ENCODE measurements at regions of chr11 and their contacts with region 1.

Region 1: GRCh38 chr11:67572747-67573419 is 10.7 kb upstream of the GSTP1 start:
- DNase-seq: peak; percentile 30 to 87 (median 48)
- ATAC-seq: peak; percentile 85
- H3K4me3 ChIP-seq: no peak overlapping the region
- H3K27ac ChIP-seq: peak overlapping the region; percentile 67; the same call in 2 of the 3 replicates
- H3K4me1 ChIP-seq: peaks cover 15 to 21% of the 10 kb centered on the region in 2 experiments; a peak in 4 of 5 replicates
- H3K27me3 ChIP-seq: no peaks in the 10 kb centered on the region
- CTCF ChIP-seq: peak; percentile 80 to 82 (median 81)
- EP300 ChIP-seq: no peak; the same call in 1 of the 2 replicates
- POLR2A ChIP-seq: no peak
- RAD21 ChIP-seq: peak; percentile 77 to 92

Region 2: GRCh38 chr11:67583247-67584204 is 10.6 kb after region 1 on chr11 and contains the start of gene GSTP1:
- CTCF ChIA-PET with region 1: interaction called, 3 read pairs
- POLR2A ChIA-PET with region 1: interaction called, 20 read pairs
- in situ Hi-C with region 1: no loop called
- intact Hi-C with region 1: no loop called
- DNase-seq: peak; percentile 94 to 96 (median 94)
- ATAC-seq: peak; percentile 95
- H3K4me3 ChIP-seq: peak within 1 kb of the TSS; percentile 62
- H3K27ac ChIP-seq: peak within 1 kb of the TSS; percentile 89
- H3K4me1 ChIP-seq: peaks cover 33 to 49% of the 10 kb centered on the region in 2 experiments
- H3K27me3 ChIP-seq: no peaks in the 10 kb centered on the region
- CTCF ChIP-seq: peak; percentile 88 to 90 (median 89)
- EP300 ChIP-seq: no peak
- POLR2A ChIP-seq: peak; percentile 95
- RAD21 ChIP-seq: peak; percentile 68 to 70
- polyA plus RNA-seq, gene GSTP1: 739 to 1,204 TPM

Region 3: GRCh38 chr11:67606492-67607201 is 33.8 kb after region 1 on chr11 and contains the start of gene NDUFV1:
- CTCF ChIA-PET with region 1: interaction called, 7 read pairs
- POLR2A ChIA-PET with region 1: no interaction called
- in situ Hi-C with region 1: no loop called
- intact Hi-C with region 1: loop called (anchors 5 kb)
- DNase-seq: peak; percentile 88 to 98 (median 92)
- ATAC-seq: peak; percentile 97
- H3K4me3 ChIP-seq: peak within 1 kb of the TSS; percentile 99
- H3K27ac ChIP-seq: peak within 1 kb of the TSS; percentile 83
- H3K4me1 ChIP-seq: peaks cover 28 to 63% of the 10 kb centered on the region in 2 experiments
- H3K27me3 ChIP-seq: no peaks in the 10 kb centered on the region
- CTCF ChIP-seq: peak; percentile 61 to 95 (median 78)
- EP300 ChIP-seq: peak; percentile 40; the same call in 1 of the 2 replicates
- POLR2A ChIP-seq: peak; percentile 89
- RAD21 ChIP-seq: peak; percentile 25 to 28; a peak in 1 of 4 replicates
- polyA plus RNA-seq, gene NDUFV1: 10.8 to 32.9 TPM

Region 4: DNA sequence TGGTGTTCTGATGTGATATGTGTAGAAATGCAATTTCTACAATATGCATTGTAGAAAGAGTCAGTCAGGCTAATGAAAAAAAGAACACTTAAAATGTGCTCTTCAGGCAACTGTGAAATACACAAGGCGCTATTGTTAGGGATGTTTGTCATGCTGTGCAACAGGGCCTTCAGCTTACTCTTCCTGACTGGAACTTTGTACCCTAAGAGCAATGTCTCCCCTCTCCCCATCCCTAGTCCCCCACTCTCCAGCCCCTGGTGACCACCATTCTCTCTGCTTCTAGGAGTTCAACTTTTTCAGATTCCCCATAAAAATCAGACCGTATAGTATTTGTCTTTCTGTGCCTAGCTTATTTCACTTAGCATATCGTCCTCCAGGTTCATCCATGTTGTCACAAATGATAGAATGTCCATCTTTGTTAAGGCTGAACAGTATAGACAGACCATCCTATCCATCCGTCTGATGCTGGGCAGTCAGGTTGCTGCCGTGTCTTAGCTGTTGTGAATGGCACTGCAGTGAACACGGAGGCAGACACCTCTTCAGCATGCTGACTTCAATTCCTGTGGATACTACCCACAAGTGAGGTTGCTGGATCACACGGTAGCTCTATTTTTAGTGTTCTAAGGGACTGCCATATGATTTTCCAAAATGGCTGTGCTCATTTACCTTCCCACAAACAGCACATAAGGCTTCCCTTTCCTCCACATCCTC is 44.5 kb after region 1 on chr11:
- CTCF ChIA-PET with region 1: no interaction called
- POLR2A ChIA-PET with region 1: no interaction called
- in situ Hi-C with region 1: no loop called
- intact Hi-C with region 1: no loop called
- DNase-seq: no peak
- ATAC-seq: no peak
- H3K4me3 ChIP-seq: no peak overlapping the region
- H3K27ac ChIP-seq: no peak overlapping the region; the same call in 2 of the 3 replicates
- H3K4me1 ChIP-seq: peaks cover 9 to 47% of the 10 kb centered on the region in 2 experiments; a peak in 4 of 5 replicates
- H3K27me3 ChIP-seq: no peaks in the 10 kb centered on the region
- CTCF ChIP-seq: no peak
- EP300 ChIP-seq: no peak
- POLR2A ChIP-seq: no peak
- RAD21 ChIP-seq: no peak

Region 5: DNA sequence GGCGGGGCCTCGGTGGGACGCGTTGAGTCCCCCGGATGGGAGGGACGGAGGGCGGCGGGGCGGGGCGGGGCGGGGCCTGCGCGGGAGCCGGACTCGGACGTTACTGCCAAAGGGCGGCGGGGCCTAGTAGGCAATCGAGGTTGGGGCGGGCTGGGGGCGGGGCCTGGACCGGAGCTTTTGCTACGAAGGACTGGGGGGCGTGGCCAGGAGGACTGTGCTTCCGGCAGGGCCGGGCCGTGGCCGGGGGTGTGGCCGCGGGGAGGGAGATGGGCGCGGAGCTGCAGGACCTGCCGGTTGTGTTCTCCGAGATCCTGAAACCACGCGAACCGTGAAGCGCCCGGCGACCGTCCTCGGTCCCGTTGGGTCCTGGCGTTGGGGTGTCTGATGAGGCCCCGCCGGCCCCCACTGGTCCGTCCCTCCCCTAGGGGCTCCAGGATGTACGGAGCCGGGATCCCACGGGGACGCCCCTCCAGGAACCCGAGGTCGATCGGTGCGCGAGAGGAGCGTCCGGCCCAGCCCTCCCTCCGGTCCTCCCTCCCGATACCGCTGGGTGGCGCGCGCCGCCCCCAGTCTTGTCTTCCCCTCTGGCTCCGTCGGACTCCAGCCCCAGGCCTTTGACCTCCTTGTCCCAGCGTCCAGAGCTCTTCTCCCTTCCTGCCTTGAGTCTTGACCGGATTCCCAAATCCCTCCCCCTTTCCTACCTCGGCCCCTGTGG is 57.5 kb after region 1 on chr11:
- CTCF ChIA-PET with region 1: interaction called, 3 read pairs
- POLR2A ChIA-PET with region 1: interaction called, 6 read pairs
- in situ Hi-C with region 1: no loop called
- intact Hi-C with region 1: loop called (anchors 2 kb)
- DNase-seq: peak; percentile 96 to 98 (median 98)
- ATAC-seq: peak; percentile 87
- H3K4me3 ChIP-seq: peak overlapping the region; percentile 71
- H3K27ac ChIP-seq: peak overlapping the region; percentile 80
- H3K4me1 ChIP-seq: peaks cover 10 to 72% of the 10 kb centered on the region in 2 experiments
- H3K27me3 ChIP-seq: no peaks in the 10 kb centered on the region
- CTCF ChIP-seq: peak; percentile 90 to 91 (median 91)
- EP300 ChIP-seq: no peak; the same call in 1 of the 2 replicates
- POLR2A ChIP-seq: peak; percentile 86
- RAD21 ChIP-seq: peak; percentile 52 to 70

Region 6: GRCh38 chr11:67640021-67640757 is 67.3 kb after region 1 on chr11:
- CTCF ChIA-PET with region 1: no interaction called
- POLR2A ChIA-PET with region 1: no interaction called
- in situ Hi-C with region 1: no loop called
- intact Hi-C with region 1: loop called (anchors 5 kb)
- DNase-seq: peak; percentile 73 to 80 (median 75)
- ATAC-seq: peak; percentile 95
- H3K4me3 ChIP-seq: no peak overlapping the region
- H3K27ac ChIP-seq: no peak overlapping the region
- H3K4me1 ChIP-seq: peaks cover 0 to 40% of the 10 kb centered on the region in 2 experiments; a peak in 3 of 5 replicates
- H3K27me3 ChIP-seq: peaks cover 0 to 19% of the 10 kb centered on the region in 2 experiments; a peak in 2 of 5 replicates
- CTCF ChIP-seq: peak; percentile 77 to 85 (median 79)
- EP300 ChIP-seq: no peak
- POLR2A ChIP-seq: no peak
- RAD21 ChIP-seq: peak; percentile 34 to 57; a peak in 2 of 4 replicates

Region 7: GRCh38 chr11:67649634-67650510 is 77.0 kb after region 1 on chr11:
- CTCF ChIA-PET with region 1: no interaction called
- POLR2A ChIA-PET with region 1: no interaction called
- in situ Hi-C with region 1: loop called (anchors 5 kb)
- intact Hi-C with region 1: loop called (anchors 5 kb)
- DNase-seq: no peak
- ATAC-seq: no peak; the same call in 2 of the 3 replicates
- H3K4me3 ChIP-seq: no peak overlapping the region
- H3K27ac ChIP-seq: no peak overlapping the region
- H3K4me1 ChIP-seq: peaks cover 0 to 38% of the 10 kb centered on the region in 2 experiments; a peak in 2 of 5 replicates
- H3K27me3 ChIP-seq: peaks cover 2 to 23% of the 10 kb centered on the region in 2 experiments; a peak in 3 of 5 replicates
- CTCF ChIP-seq: no peak
- EP300 ChIP-seq: no peak
- POLR2A ChIP-seq: no peak
- RAD21 ChIP-seq: no peak

Region 8: GRCh38 chr11:67656278-67656922 is 83.5 kb after region 1 on chr11:
- CTCF ChIA-PET with region 1: no interaction called
- POLR2A ChIA-PET with region 1: no interaction called
- in situ Hi-C with region 1: loop called (anchors 5 kb)
- intact Hi-C with region 1: loop called (anchors 5 kb)
- DNase-seq: peak in 1 of 4 experiments; percentile 40
- ATAC-seq: peak; percentile 47; the same call in 1 of the 3 replicates
- H3K4me3 ChIP-seq: no peak overlapping the region
- H3K27ac ChIP-seq: no peak overlapping the region
- H3K4me1 ChIP-seq: no peaks in the 10 kb centered on the region
- H3K27me3 ChIP-seq: peaks cover 0 to 9% of the 10 kb centered on the region in 2 experiments; a peak in 3 of 5 replicates
- CTCF ChIP-seq: no peak
- EP300 ChIP-seq: no peak
- POLR2A ChIP-seq: no peak
- RAD21 ChIP-seq: no peak